GM13976 (cell line): ENCODE measurements at regions of chr2 and their contacts with region 1.

Region 1: DNA sequence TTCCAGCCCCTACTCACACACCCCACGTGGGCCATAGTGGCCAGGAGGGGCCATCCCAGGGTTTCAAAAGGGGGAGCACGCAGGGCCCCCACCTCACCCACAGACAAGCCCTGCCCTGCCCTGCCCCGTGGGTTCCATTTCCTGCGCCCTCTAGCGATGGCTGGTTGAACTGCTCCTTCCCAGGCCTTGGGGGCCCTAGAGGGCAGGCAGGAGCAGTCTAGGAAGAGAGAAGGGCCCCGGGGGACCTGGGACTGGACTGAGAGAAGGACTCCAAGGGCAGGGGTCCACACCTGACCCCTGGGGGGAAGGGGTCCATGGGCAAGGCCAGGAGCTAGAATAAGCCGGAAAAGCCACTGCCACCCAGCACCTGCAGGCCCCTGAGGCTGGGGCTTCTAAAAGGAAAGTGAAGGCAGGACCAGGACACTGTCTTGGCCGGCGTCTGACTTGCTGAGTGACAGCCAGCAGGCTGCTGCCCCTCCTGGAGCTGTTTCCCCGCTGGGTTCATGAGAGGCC is 10.1 kb downstream of the CYP26B1 start:
- DNase-seq: peak; percentile 90
- CTCF ChIP-seq: peak; percentile 94

Region 2: DNA sequence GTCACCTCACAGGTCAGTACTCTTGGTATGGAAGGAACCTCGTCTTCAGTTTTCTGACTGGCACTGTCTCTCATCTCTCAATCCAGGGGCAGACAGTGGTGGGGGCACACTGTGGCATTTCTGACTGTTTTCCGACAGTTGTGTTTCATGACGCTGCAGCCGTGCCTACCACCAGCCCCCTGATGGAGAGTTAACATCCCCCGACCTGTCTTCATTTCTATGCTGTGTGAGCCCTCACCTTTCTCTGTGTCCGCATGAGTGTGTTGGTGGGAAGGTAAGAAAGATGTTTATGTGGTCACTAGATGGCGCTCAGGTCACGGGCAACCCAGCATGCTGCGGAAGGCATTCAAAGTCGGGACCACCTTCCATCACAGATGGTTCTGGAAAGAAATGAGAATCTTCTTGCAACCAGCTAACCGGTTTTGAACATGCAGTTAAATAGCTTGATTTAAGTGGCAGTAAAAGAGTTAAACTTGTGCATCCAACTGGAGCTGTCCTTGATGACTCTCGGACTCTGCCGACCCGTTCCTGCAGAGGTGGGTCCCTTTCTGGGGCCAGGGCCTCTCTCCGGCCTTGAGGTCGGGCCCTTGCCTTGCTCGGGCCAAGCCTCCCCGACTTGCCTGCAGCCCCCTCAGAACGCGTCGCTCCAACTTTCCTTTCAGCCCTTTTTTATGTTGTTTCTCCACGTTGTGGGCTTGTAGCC is 591.8 kb before region 1 on chr2:
- in situ Hi-C with region 1: loop called (anchors 25 kb)
- DNase-seq: peak; percentile 79
- CTCF ChIP-seq: peak; percentile 58

Region 3: GRCh38 chr2:71646028-71646427 is 491.5 kb before region 1 on chr2:
- in situ Hi-C with region 1: no loop called
- DNase-seq: no peak
- CTCF ChIP-seq: no peak

Region 4: GRCh38 chr2:71995067-71995665 is 142.4 kb before region 1 on chr2:
- in situ Hi-C with region 1: no loop called
- DNase-seq: no peak
- CTCF ChIP-seq: no peak